ENCODE measurements at regions of chr2 and their contacts with region 1.

Region 1: GRCh38 chr2:23384551-23385349 is at the start of gene KLHL29:
- DNase-seq: peak; percentile 65
- H3K4me3 ChIP-seq: peak within 1 kb of the TSS; percentile 57 to 88 (median 66)
- H3K27ac ChIP-seq: no peak within 1 kb of the TSS
- H3K4me1 ChIP-seq: peaks cover 27% of the 10 kb centered on the region
- H3K27me3 ChIP-seq: peaks cover 2% of the 10 kb centered on the region
- CTCF ChIP-seq: no peak
- total RNA-seq, gene KLHL29: 15.6 to 16.3 TPM

Region 2: GRCh38 chr2:23330214-23330613 is 54.5 kb before region 1 on chr2:
- CTCF ChIA-PET with region 1: no interaction called
- dilution Hi-C with region 1: no loop called
- in situ Hi-C with region 1: no loop called
- intact Hi-C with region 1: no loop called
- DNase-seq: no peak
- H3K4me3 ChIP-seq: no peak overlapping the region
- H3K27ac ChIP-seq: no peak overlapping the region
- H3K4me1 ChIP-seq: no peaks in the 10 kb centered on the region
- H3K27me3 ChIP-seq: no peaks in the 10 kb centered on the region
- CTCF ChIP-seq: peak in 1 of 2 donors; percentile 9

Region 3: DNA sequence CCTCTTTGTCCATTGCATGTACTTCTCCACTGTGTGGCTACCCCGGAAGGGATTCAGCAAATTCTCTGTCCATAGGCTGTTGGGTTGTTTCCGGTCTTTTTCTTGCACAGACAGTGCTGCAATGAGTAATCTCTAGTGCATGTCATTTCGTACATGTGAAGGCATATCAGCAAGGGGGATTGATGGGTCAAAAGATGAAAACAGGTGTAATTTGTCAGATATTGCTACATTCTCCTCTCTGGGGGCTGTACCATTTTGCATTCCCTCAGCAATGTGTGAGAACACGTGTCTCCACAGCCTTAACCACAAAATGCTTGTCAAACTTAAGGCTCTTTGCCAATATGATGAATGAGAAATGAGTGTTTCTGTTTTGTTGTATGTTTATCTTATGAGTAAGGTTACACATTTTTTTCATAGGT is 60.7 kb after region 1 on chr2:
- CTCF ChIA-PET with region 1: no interaction called
- dilution Hi-C with region 1: no loop called
- in situ Hi-C with region 1: no loop called
- intact Hi-C with region 1: loop called (anchors 1 kb)
- DNase-seq: peak; percentile 83
- H3K4me3 ChIP-seq: no peak overlapping the region
- H3K27ac ChIP-seq: no peak overlapping the region
- H3K4me1 ChIP-seq: peaks cover 11% of the 10 kb centered on the region
- H3K27me3 ChIP-seq: peaks cover 11% of the 10 kb centered on the region
- CTCF ChIP-seq: no peak

Region 4: DNA sequence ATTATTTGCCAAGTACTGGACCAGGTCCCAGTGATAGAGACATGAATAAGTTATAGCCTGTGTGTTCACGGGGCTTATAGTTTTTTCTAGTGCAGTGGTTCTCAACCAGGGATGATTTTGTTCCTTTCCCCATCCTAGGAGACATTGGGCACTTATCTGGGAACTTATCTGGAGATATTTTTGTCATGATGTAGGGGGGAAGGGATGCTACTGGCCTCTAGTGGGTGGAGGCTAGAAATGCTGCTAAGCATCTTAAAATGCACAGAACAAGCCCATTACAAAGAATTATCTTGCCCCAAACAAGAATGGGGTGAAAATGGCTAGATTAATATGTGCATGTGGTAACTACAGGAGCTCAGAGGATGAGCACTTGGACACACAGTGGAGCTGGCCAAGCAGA is 75.5 kb after region 1 on chr2:
- CTCF ChIA-PET with region 1: no interaction called
- dilution Hi-C with region 1: no loop called
- in situ Hi-C with region 1: no loop called
- intact Hi-C with region 1: loop called (anchors 1 kb)
- DNase-seq: no peak
- H3K4me3 ChIP-seq: no peak overlapping the region
- H3K27ac ChIP-seq: no peak overlapping the region
- H3K4me1 ChIP-seq: peaks cover 3% of the 10 kb centered on the region
- H3K27me3 ChIP-seq: no peaks in the 10 kb centered on the region
- CTCF ChIP-seq: peak; percentile 67

Measured in mammary epithelial cell (primary cell).